Psoas muscle (tissue), 8 donors: ENCODE measurements at regions of chr2 and their contacts with region 1.

Region 1: DNA sequence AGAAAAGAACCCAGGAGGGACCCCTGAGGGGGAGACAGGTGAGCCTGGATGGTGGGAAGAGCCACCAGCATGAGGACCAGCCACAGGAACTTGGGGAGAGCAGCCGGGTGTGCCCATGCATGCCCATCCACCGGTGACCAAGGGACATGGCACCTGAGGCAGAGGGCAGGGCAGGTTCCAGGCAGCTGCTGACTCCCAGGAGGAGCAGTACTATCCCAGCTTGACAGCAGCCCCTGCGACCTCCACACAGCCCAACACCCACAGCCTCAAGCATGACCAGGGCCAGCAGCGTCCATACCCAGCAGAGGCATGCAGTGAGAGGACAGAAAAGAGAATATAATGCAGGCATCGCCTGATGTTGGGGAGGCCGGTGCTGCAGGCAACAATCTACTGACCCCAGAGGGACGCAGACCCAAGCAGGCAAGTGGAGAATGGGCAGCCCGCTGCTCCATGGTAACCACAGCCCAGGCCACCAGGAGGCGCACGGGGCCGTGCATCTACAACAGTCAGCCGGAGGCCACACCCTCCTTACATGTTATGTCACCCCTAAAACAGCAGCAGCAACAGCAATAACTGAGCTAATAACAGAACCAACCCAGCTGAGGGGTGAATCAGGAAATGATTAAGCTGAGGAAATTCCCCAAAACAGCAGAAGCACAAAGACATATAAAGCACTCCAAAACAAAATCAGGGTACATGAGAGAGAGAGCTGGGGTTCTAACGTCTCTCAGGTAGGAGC is 44.1 kb downstream of the ANKMY1 start:
- DNase-seq: peak; percentile 78 to 88
- ATAC-seq: peak; percentile 74 to 90 (median 86)
- H3K4me3 ChIP-seq: no peak overlapping the region
- H3K27ac ChIP-seq: no peak overlapping the region
- H3K4me1 ChIP-seq: no peaks in the 10 kb centered on the region
- H3K27me3 ChIP-seq: no peaks in the 10 kb centered on the region
- CTCF ChIP-seq: peak; percentile 65

Region 2: GRCh38 chr2:240586198-240586918 is 72.6 kb after region 1 on chr2 and contains the start of gene CAPN10:
- intact Hi-C with region 1: no loop called
- DNase-seq: peak; percentile 99
- ATAC-seq: peak; percentile 95 to 97 (median 96)
- H3K4me3 ChIP-seq: peak within 1 kb of the TSS; percentile 95
- H3K27ac ChIP-seq: peak within 1 kb of the TSS; percentile 99
- H3K4me1 ChIP-seq: peaks cover 28% of the 10 kb centered on the region
- H3K27me3 ChIP-seq: no peaks in the 10 kb centered on the region
- CTCF ChIP-seq: no peak
- total RNA-seq, gene CAPN10: 5.0 to 9.9 (median 7.6) TPM

Region 3: DNA sequence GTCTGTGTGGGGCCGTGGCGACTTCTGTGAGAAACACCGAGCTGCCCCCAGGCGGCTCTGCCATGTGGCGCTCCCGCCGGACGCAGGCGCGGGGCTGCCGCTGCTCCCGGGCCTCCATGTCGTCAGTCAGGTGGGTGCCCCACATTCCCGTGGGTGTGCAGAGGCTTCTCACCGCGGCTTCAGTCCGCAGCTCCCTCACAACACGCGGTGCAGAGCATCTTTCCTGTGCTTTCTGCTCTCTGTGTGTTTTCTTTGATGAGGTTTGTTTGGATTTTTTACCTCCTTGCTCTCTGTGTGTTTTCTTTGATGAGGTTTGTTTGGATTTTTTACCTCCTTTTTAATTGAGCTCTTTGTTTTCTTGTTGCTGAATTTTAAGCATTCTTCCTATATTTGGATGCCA is 190.9 kb after region 1 on chr2:
- intact Hi-C with region 1: loop called in 1 of 2 experiments (anchors 10 kb)
- DNase-seq: peak; percentile 3 to 19
- ATAC-seq: no peak
- H3K4me3 ChIP-seq: no peak overlapping the region
- H3K27ac ChIP-seq: no peak overlapping the region
- H3K4me1 ChIP-seq: no peaks in the 10 kb centered on the region
- H3K27me3 ChIP-seq: peaks cover 0 to 30% (median 11%) of the 10 kb centered on the region in 3 donors
- CTCF ChIP-seq: no peak